Left colon (tissue), 2 donors: ENCODE measurements at regions of chr18 and their contacts with region 1.

Region 1: DNA sequence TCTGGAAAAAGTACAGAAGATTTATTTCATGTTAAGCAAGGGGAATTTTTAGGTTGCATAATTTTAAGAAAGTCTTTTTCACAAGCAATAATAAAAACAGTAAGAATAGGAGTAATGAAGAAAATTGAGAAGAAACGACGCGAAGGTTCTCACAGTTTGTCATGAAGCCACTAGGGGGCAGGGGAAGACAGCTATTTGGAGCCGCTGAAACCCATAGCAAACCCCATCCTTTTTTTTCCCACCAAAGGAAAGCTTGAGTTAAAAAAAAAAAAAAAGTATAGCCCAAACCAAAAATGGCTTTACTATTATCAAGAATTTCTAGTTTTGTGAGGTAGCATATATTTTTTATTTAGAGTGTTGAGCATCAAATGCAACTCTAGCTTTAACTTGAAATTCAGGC is 300.9 kb downstream of the PHLPP1 start:
- DNase-seq: peak in 1 of 2 donors; percentile 48
- ATAC-seq: peak; percentile 69

Region 2: DNA sequence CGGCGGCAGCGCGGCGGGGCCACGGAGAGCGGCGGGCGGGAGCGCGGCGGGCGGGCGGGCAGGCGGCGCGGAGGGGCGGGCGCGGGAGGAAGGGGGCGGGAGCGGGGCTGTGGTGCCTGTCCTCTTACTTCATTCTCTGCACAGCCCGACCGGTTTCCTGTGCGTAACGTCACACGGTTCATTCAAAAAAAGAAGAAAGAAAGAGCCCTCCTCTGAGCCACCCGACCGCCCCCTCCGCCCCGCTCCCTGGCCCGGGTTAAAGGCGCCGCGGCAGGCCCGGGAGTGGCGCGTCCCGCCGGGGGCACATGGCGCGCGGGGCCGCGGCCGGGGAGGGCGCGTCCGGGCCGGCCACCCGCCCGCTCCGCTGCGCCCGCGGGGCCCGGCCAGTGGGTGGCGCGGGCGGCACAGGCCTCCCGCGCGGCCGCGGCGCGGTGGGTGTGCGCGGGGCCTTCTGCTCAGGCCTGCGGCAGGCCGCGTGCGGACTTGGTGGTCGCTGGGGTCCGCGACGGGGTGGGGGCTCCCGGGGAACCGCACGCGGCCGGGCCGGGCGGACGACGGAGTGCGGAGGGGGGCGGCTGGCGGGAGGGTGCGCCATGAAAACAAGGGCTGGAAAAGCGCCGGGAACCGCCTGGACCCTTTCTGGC is 303.9 kb after region 1 on chr18:
- intact Hi-C with region 1: loop called in 1 of 2 experiments (anchors 5 kb)
- DNase-seq: peak; percentile 88 to 89
- ATAC-seq: peak; percentile 67

Region 3: DNA sequence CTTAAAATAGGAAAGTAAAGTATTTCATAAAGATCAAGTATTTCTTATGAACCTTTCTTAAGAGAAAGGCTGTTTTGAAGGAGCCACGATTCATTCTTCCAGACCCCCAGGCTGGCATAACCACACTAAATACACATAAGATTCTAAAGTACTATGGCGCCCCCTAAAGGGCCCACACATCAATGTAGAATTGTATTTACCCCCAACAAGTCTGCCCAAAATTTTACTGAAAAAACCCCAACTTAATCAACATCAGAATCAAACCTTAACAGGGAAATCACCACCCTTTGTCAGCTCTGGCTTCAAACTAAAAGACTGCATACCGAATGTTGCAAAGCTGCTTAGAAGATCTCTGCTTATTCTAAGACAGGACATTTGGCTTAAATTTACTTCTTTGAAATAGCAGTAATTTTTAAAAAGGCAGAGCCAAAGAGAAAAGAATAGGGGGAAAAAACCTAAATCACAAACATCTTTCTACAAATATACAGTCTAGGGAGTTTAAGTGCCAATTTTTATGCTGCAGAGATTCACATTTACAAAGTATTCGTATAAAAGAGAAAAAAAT is 323.7 kb after region 1 on chr18:
- intact Hi-C with region 1: loop called in 1 of 2 experiments (anchors 10 kb)
- DNase-seq: peak in 1 of 2 donors; percentile 32
- ATAC-seq: no peak

Region 4: GRCh38 chr18:63444567-63444966 is 428.3 kb after region 1 on chr18:
- intact Hi-C with region 1: loop called in 1 of 2 experiments (anchors 10 kb)
- DNase-seq: no peak
- ATAC-seq: peak; percentile 62